Activated naive CD8-positive, alpha-beta T cell treated with anti-CD3 and anti-CD28 coated beads, Interleukin-2, amount 10 ng/mL, durations not matched to agents 7 days and 5 days (primary cell): ENCODE measurements at regions of chr3 and their contacts with region 1.

Region 1: GRCh38 chr3:105868742-105869530 is at the start of gene CBLB:
- DNase-seq: peak; percentile 88
- ATAC-seq: peak; percentile 91
- H3K4me3 Mint-ChIP-seq: peak within 1 kb of the TSS; percentile 93
- H3K27ac Mint-ChIP-seq: peak within 1 kb of the TSS; percentile 98
- H3K4me1 Mint-ChIP-seq: peaks cover 29% of the 10 kb centered on the region
- H3K27me3 Mint-ChIP-seq: no peaks in the 10 kb centered on the region
- total RNA-seq, gene CBLB: 146 to 157 TPM

Region 2: DNA sequence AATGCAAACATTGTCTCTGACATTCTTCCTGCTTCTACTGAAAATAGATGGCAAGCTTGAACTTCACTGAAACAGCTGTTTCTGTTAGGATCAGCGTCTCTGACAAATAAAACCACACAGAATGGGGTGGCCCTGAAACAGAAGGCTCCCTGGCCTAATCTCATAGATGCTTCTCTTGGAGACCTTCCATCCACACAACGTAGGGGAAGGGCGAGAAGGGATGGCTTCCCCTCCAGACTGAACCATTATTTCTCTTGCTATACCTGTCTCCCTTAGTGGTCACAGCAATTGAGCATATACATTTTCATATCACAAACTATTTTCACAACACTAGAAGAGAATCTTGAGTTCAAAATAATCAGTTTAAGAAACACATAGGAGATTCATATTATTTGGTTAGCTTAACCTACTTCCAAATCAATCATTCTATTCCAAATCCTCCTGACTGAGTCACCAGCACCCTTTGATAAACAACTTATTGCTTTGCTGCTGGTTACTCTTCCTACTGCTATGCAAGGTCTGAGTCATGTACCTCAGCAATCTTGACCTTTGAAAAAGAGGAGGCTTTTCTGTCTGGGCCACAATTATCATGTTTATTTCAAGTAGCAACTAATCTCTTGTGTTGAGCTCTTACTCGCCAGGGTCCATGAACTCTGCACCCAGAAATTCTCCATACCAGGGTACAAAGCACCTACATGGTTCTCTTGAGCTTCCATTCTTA is 45.6 kb before region 1 on chr3:
- POLR2A ChIA-PET with region 1: interaction called, 13 read pairs
- DNase-seq: no peak
- ATAC-seq: no peak
- H3K4me3 Mint-ChIP-seq: no peak overlapping the region
- H3K27ac Mint-ChIP-seq: peak overlapping the region; percentile 22
- H3K4me1 Mint-ChIP-seq: peaks cover 47% of the 10 kb centered on the region
- H3K27me3 Mint-ChIP-seq: no peaks in the 10 kb centered on the region

Region 3: GRCh38 chr3:105847452-105847851 is 21.5 kb before region 1 on chr3:
- POLR2A ChIA-PET with region 1: no interaction called
- DNase-seq: no peak
- ATAC-seq: no peak
- H3K4me3 Mint-ChIP-seq: peak overlapping the region; percentile 21
- H3K27ac Mint-ChIP-seq: peak overlapping the region; percentile 56
- H3K4me1 Mint-ChIP-seq: peaks cover 44% of the 10 kb centered on the region
- H3K27me3 Mint-ChIP-seq: no peaks in the 10 kb centered on the region

Region 4: GRCh38 chr3:105883798-105884377 is 15.0 kb after region 1 on chr3:
- POLR2A ChIA-PET with region 1: interaction called, 19 read pairs
- DNase-seq: no peak
- ATAC-seq: no peak
- H3K4me3 Mint-ChIP-seq: peak overlapping the region; percentile 81
- H3K27ac Mint-ChIP-seq: peak overlapping the region; percentile 9
- H3K4me1 Mint-ChIP-seq: peaks cover 6% of the 10 kb centered on the region
- H3K27me3 Mint-ChIP-seq: no peaks in the 10 kb centered on the region

Region 5: GRCh38 chr3:105906836-105907235 is 37.9 kb after region 1 on chr3:
- POLR2A ChIA-PET with region 1: no interaction called
- DNase-seq: no peak
- ATAC-seq: no peak
- H3K4me3 Mint-ChIP-seq: no peak overlapping the region
- H3K27ac Mint-ChIP-seq: no peak overlapping the region
- H3K4me1 Mint-ChIP-seq: peaks cover 7% of the 10 kb centered on the region
- H3K27me3 Mint-ChIP-seq: no peaks in the 10 kb centered on the region